Mammary epithelial cell (primary cell): ENCODE measurements at regions of chr15 and their contacts with region 1.

Region 1: GRCh38 chr15:32651229-32651837 is 9.8 kb downstream of the SCG5 start:
- DNase-seq: peak; percentile 47
- H3K4me3 ChIP-seq: no peak overlapping the region
- H3K27ac ChIP-seq: no peak overlapping the region
- H3K4me1 ChIP-seq: peaks cover 22% of the 10 kb centered on the region
- H3K27me3 ChIP-seq: no peaks in the 10 kb centered on the region
- CTCF ChIP-seq: peak; percentile 98 to 99

Region 2: DNA sequence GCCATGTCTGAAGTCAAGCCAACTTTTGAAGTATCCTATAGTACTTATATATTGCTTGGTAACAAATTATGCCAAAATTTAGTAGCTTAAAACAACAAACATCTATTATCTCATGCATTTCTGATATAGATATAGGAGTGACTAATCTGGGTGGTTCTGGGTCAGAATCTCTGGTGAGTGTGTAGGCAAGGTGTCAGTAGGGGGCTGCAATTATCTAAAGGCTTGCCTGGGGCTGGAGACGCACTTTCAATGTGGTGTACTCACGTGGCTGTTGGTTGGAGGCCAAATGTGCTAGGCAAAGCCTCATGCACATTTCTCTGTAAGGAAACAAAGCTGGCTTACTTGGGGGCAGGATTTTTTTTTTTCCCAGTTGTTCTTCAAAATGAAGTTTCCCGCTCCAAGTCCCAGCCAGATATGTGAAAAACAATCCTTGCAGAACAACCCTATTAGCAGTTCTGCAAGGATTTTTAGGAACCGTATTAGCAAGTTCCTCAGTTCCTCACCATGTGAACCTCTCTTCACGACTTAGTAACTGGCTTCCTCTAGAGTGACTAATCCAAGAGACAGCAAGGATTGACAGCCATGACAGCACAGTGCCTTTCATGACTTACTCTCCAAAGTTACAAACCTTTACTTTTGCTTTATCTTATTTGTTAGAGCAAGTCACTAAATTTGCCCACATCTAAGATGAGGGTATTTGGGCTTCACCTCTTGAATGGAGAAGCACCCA is 92.2 kb after region 1 on chr15:
- CTCF ChIA-PET with region 1: no interaction called
- dilution Hi-C with region 1: no loop called
- in situ Hi-C with region 1: no loop called
- intact Hi-C with region 1: no loop called
- DNase-seq: no peak
- H3K4me3 ChIP-seq: no peak overlapping the region
- H3K27ac ChIP-seq: no peak overlapping the region
- H3K4me1 ChIP-seq: no peaks in the 10 kb centered on the region
- H3K27me3 ChIP-seq: no peaks in the 10 kb centered on the region
- CTCF ChIP-seq: no peak

Region 3: GRCh38 chr15:32936283-32936918 is 285.1 kb after region 1 on chr15:
- CTCF ChIA-PET with region 1: interaction called, 14 read pairs
- dilution Hi-C with region 1: no loop called
- in situ Hi-C with region 1: no loop called
- intact Hi-C with region 1: loop called (anchors 1 kb)
- DNase-seq: peak; percentile 11
- H3K4me3 ChIP-seq: no peak overlapping the region
- H3K27ac ChIP-seq: no peak overlapping the region
- H3K4me1 ChIP-seq: no peaks in the 10 kb centered on the region
- H3K27me3 ChIP-seq: no peaks in the 10 kb centered on the region
- CTCF ChIP-seq: peak; percentile 73 to 74

Region 4: GRCh38 chr15:32994810-32995424 is 343.6 kb after region 1 on chr15:
- CTCF ChIA-PET with region 1: no interaction called
- dilution Hi-C with region 1: no loop called
- in situ Hi-C with region 1: loop called in 1 of 2 experiments (anchors 5 kb)
- intact Hi-C with region 1: loop called (anchors 1 kb)
- DNase-seq: no peak
- H3K4me3 ChIP-seq: no peak overlapping the region
- H3K27ac ChIP-seq: no peak overlapping the region
- H3K4me1 ChIP-seq: no peaks in the 10 kb centered on the region
- H3K27me3 ChIP-seq: no peaks in the 10 kb centered on the region
- CTCF ChIP-seq: peak; percentile 56 to 67

Region 5: DNA sequence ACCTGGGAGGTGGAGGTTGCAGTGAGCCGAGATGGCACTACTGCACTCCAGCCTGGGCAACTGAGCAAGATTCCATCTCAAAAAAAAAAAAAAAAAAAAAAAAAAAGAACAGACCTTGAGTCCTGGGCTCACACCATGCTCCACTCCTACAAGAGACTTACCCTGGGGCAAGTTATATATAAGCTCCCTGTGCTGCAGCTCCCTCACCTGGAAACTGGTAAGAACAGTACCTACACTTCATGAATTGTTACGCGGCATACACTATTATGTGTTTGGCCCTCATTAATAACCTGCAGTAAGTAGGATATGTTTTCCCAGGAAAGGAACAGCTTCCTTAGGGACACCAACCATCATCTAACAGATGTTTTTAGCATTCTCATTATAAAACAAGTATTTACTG is 423.6 kb after region 1 on chr15:
- CTCF ChIA-PET with region 1: no interaction called
- dilution Hi-C with region 1: no loop called
- in situ Hi-C with region 1: no loop called
- intact Hi-C with region 1: loop called (anchors 5 kb)
- DNase-seq: peak; percentile 19
- H3K4me3 ChIP-seq: no peak overlapping the region
- H3K27ac ChIP-seq: no peak overlapping the region
- H3K4me1 ChIP-seq: no peaks in the 10 kb centered on the region
- H3K27me3 ChIP-seq: no peaks in the 10 kb centered on the region
- CTCF ChIP-seq: peak in 1 of 2 donors; percentile 55